ENCODE measurements at regions of chr14 and their contacts with region 1.

Region 1: GRCh38 chr14:28751467-28752058 is 15.0 kb upstream of the FOXG1 start:
- DNase-seq: peak; percentile 81
- ATAC-seq: peak; percentile 98
- H3K4me3 ChIP-seq: no peak overlapping the region
- H3K27ac ChIP-seq: no peak overlapping the region
- H3K4me1 ChIP-seq: no peaks in the 10 kb centered on the region
- H3K27me3 ChIP-seq: peaks cover 3 to 21% of the 10 kb centered on the region in 2 experiments; a peak in 3 of 5 replicates
- CTCF ChIP-seq: peak; percentile 95
- EP300 ChIP-seq: no peak
- POLR2A ChIP-seq: no peak
- RAD21 ChIP-seq: peak; percentile 67

Region 2: DNA sequence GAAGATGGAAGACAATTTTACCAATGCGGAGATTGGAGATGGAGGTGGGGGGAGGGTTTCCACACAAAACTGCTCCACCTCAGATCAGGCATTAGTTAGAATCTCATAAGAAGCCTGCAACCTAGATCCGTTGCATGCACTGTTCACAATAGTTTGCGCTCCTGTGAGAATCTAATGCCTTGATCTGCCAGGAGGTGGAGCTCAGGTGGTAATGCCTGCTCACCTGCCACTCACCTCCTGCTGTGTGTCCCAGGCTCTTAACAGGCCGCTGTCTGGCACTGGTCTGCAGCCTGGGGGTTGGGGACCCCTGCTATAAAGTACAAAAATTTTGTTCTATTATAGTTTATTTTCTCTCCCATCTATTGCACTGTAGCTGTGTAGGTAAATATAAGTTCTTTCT is 69.9 kb before region 1 on chr14:
- CTCF ChIA-PET with region 1: no interaction called
- POLR2A ChIA-PET with region 1: no interaction called
- in situ Hi-C with region 1: no loop called
- intact Hi-C with region 1: no loop called
- DNase-seq: no peak
- ATAC-seq: peak; percentile 76
- H3K4me3 ChIP-seq: no peak overlapping the region
- H3K27ac ChIP-seq: no peak overlapping the region
- H3K4me1 ChIP-seq: no peaks in the 10 kb centered on the region
- H3K27me3 ChIP-seq: no peaks in the 10 kb centered on the region
- CTCF ChIP-seq: 0 out of 2 replicates have a peak, but pooled peaks have one; percentile 14
- EP300 ChIP-seq: no peak
- POLR2A ChIP-seq: no peak
- RAD21 ChIP-seq: no peak

Region 3: GRCh38 chr14:29016050-29016900 is 264.7 kb after region 1 on chr14:
- CTCF ChIA-PET with region 1: interaction called, 5 read pairs
- POLR2A ChIA-PET with region 1: no interaction called
- in situ Hi-C with region 1: no loop called
- intact Hi-C with region 1: loop called (anchors 5 kb)
- DNase-seq: peak; percentile 78
- ATAC-seq: peak; percentile 99
- H3K4me3 ChIP-seq: no peak overlapping the region
- H3K27ac ChIP-seq: no peak overlapping the region
- H3K4me1 ChIP-seq: no peaks in the 10 kb centered on the region
- H3K27me3 ChIP-seq: no peaks in the 10 kb centered on the region
- CTCF ChIP-seq: peak; percentile 98
- EP300 ChIP-seq: no peak
- POLR2A ChIP-seq: no peak
- RAD21 ChIP-seq: peak; percentile 96

Region 4: GRCh38 chr14:29463727-29464395 is 712.3 kb after region 1 on chr14:
- CTCF ChIA-PET with region 1: no interaction called
- POLR2A ChIA-PET with region 1: no interaction called
- in situ Hi-C with region 1: no loop called
- intact Hi-C with region 1: loop called (anchors 10 kb)
- DNase-seq: no peak
- ATAC-seq: no peak
- H3K4me3 ChIP-seq: no peak overlapping the region
- H3K27ac ChIP-seq: no peak overlapping the region
- H3K4me1 ChIP-seq: no peaks in the 10 kb centered on the region
- H3K27me3 ChIP-seq: no peaks in the 10 kb centered on the region
- CTCF ChIP-seq: no peak
- EP300 ChIP-seq: no peak
- POLR2A ChIP-seq: no peak
- RAD21 ChIP-seq: no peak

Region 5: DNA sequence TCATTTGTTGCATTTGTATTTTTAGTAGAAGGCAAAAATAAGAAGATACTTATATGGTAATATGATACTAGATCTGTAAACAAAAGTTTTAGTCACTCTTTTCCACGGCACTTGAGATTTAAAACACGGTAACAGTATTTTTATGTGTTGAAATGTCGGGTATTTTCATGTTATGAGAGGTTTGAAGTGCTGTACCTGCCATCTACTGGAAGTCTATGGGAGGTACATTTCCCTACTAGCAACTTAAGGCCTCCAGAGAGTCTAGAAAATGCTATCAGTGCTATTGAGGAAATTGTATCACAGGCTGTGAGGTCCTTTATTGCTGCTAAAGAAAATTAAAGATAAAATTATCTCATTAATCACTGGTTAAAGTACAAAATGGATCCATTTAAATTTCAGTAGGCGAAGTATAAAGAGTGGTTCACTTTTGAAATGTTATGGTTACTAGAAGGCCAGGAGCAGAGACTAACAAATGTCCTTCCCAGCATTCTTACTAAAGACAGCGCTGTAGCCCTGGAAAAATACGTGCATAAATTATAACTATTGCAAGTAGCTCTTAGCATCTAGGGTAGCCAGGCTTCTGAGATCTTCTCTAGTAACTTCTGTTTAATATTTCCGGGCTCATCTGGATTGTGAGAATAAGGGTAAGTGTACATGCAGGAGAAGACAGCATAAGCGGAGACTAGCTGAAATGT is 1253.7 kb after region 1 on chr14:
- CTCF ChIA-PET with region 1: interaction called, 17 read pairs
- POLR2A ChIA-PET with region 1: no interaction called
- in situ Hi-C with region 1: loop called (anchors 5 kb)
- intact Hi-C with region 1: loop called (anchors 1 kb)
- DNase-seq: peak; percentile 62
- ATAC-seq: peak; percentile 98
- H3K4me3 ChIP-seq: no peak overlapping the region
- H3K27ac ChIP-seq: no peak overlapping the region
- H3K4me1 ChIP-seq: no peaks in the 10 kb centered on the region
- H3K27me3 ChIP-seq: no peaks in the 10 kb centered on the region
- CTCF ChIP-seq: peak; percentile 78
- EP300 ChIP-seq: no peak
- POLR2A ChIP-seq: no peak
- RAD21 ChIP-seq: no peak; the same call in 1 of the 2 replicates

Region 6: GRCh38 chr14:30330445-30330844 is 1578.9 kb after region 1 on chr14:
- CTCF ChIA-PET with region 1: no interaction called
- POLR2A ChIA-PET with region 1: no interaction called
- in situ Hi-C with region 1: no loop called
- intact Hi-C with region 1: loop called (anchors 1 kb)
- DNase-seq: no peak
- ATAC-seq: peak; percentile 27; the same call in 1 of the 3 replicates
- H3K4me3 ChIP-seq: no peak overlapping the region
- H3K27ac ChIP-seq: no peak overlapping the region
- H3K4me1 ChIP-seq: no peaks in the 10 kb centered on the region
- H3K27me3 ChIP-seq: no peaks in the 10 kb centered on the region
- CTCF ChIP-seq: peak; percentile 41
- EP300 ChIP-seq: no peak
- POLR2A ChIP-seq: no peak
- RAD21 ChIP-seq: no peak

Region 7: DNA sequence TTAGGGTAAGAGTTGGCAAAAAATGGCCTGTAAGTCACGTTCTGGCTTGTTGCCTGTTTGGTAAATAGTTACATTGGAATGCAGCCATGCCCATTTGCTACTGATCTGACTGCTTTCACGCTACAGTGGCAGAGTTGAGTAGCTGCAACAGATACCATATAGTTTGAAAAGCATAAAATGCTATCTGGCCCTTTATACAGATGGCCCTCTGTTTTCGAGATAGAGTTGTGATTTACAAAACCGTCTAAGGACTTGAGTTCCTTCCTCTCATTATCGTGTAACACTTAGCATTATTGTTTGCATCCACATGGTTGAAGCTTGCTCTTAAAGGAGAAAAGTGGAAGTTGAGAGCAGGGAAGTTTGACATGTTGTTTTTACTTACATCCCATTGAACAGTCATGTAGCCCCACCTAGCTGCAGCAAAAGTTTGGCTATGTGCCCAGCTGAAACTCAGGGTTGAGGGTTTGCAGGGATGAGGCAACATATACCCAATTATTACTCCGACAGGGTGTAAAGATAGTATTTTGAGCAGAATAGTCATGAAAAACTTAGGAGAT is 1859.3 kb after region 1 on chr14:
- CTCF ChIA-PET with region 1: no interaction called
- POLR2A ChIA-PET with region 1: no interaction called
- in situ Hi-C with region 1: no loop called
- intact Hi-C with region 1: loop called (anchors 10 kb)
- DNase-seq: peak; percentile 75
- ATAC-seq: peak; percentile 75
- H3K4me3 ChIP-seq: no peak overlapping the region
- H3K27ac ChIP-seq: no peak overlapping the region
- H3K4me1 ChIP-seq: no peaks in the 10 kb centered on the region
- H3K27me3 ChIP-seq: no peaks in the 10 kb centered on the region
- CTCF ChIP-seq: peak; percentile 76
- EP300 ChIP-seq: 0 out of 4 replicates have a peak, but pooled peaks of 1 of the 2 experiments have one; percentile 5
- POLR2A ChIP-seq: no peak
- RAD21 ChIP-seq: no peak

Measured in HepG2 (cell line).